Activated CD4-positive, alpha-beta memory T cell treated with anti-CD3 and anti-CD28 coated beads for 36 hours (primary cell): ENCODE measurements at regions of chr3 and their contacts with region 1.

Region 1: DNA sequence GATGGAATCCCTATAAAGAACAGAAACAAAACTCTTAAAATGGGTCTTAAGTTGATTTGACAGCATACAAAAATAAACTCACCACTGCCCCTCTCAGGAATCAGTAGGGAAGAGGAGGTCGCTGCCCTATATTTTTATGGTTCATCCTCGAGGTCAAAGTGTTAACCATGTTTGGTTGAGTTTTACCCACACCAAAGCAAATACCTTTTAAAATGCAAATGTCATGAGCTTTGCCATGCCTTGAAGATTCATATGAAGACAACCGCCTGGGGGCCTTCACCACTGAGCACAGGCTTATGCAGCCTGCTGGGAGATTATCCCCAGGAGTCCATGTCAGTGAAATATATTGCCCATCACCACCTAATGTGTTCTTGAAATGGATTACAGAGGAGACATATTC is 66.1 kb downstream of the GLB1 start:
- DNase-seq: peak; percentile 72
- H3K4me3 Mint-ChIP-seq: peak overlapping the region; percentile 36
- H3K27ac Mint-ChIP-seq: peak overlapping the region; percentile 76
- H3K4me1 Mint-ChIP-seq: peaks cover 34% of the 10 kb centered on the region
- H3K27me3 Mint-ChIP-seq: no peaks in the 10 kb centered on the region

Region 2: GRCh38 chr3:32177702-32178198 is 853.1 kb before region 1 on chr3:
- CTCF ChIA-PET with region 1: no interaction called
- POLR2A ChIA-PET with region 1: no interaction called
- intact Hi-C with region 1: no loop called
- DNase-seq: peak; percentile 73
- H3K4me3 Mint-ChIP-seq: peak overlapping the region; percentile 25
- H3K27ac Mint-ChIP-seq: no peak overlapping the region
- H3K4me1 Mint-ChIP-seq: peaks cover 12% of the 10 kb centered on the region
- H3K27me3 Mint-ChIP-seq: no peaks in the 10 kb centered on the region

Region 3: GRCh38 chr3:33006081-33006480 is 24.7 kb before region 1 on chr3:
- CTCF ChIA-PET with region 1: interaction called, 16 read pairs
- POLR2A ChIA-PET with region 1: no interaction called
- intact Hi-C with region 1: no loop called
- DNase-seq: peak; percentile 66
- H3K4me3 Mint-ChIP-seq: no peak overlapping the region
- H3K27ac Mint-ChIP-seq: peak overlapping the region; percentile 86
- H3K4me1 Mint-ChIP-seq: peaks cover 72% of the 10 kb centered on the region
- H3K27me3 Mint-ChIP-seq: no peaks in the 10 kb centered on the region

Region 4: GRCh38 chr3:33041909-33042308 is 11.1 kb after region 1 on chr3:
- CTCF ChIA-PET with region 1: interaction called, 38 read pairs
- POLR2A ChIA-PET with region 1: interaction called, 8 read pairs
- intact Hi-C with region 1: loop called (anchors 1 kb)
- DNase-seq: no peak
- H3K4me3 Mint-ChIP-seq: no peak overlapping the region
- H3K27ac Mint-ChIP-seq: no peak overlapping the region
- H3K4me1 Mint-ChIP-seq: peaks cover 51% of the 10 kb centered on the region
- H3K27me3 Mint-ChIP-seq: no peaks in the 10 kb centered on the region

Region 5: DNA sequence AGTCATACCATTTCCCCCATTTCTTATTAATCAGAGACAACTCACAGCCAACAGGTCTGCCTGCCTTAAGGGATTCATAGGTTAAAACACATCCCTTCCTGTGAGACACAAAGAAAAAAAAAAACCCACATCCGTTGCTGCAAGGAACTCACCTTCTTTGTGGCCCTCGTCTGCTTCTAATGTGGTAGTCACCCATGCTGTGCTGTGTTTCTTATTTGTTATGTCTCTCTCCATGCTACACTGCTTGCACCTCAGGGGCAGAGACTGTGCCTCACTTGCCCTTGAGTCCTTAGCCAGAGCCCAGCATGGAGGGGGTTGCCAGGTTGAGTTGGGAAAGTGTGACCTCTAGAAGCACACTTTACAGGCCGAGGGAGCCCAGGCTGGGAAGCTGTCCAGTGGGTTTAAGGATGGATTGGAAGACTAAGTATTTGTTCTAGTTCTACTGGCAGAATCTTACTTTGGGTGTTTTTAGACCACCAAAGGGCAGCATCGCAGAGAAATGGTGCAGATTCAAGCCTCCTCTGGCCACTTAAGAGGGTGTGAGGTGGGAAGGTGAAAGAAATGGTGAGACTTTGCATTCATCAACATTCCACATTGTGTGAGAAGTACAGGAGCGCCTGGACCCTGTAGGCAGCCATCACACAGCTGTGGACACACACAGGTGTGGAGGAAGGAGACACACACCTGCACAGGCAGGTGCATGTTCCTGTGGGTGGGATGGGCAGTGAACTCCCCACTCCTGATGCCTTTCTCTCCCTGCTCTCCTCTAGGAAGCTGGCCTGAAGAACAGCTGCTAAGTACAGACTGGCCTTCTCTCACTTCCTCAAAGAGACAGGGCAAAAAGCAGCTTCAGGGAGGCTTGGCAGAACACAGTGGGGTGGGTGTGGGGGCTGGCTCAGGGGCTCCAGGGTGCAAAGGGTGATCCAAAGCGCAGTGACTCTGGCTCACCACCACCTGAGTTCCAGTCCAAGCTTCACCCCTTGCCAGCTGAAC is 17.3 kb after region 1 on chr3:
- CTCF ChIA-PET with region 1: interaction called, 38 read pairs
- POLR2A ChIA-PET with region 1: interaction called, 8 read pairs
- intact Hi-C with region 1: loop called (anchors 1 kb)
- DNase-seq: peak; percentile 73
- H3K4me3 Mint-ChIP-seq: peak overlapping the region; percentile 52
- H3K27ac Mint-ChIP-seq: peak overlapping the region; percentile 96
- H3K4me1 Mint-ChIP-seq: peaks cover 79% of the 10 kb centered on the region
- H3K27me3 Mint-ChIP-seq: no peaks in the 10 kb centered on the region